ENCODE measurements at regions of chr11 and their contacts with region 1.

Region 1: DNA sequence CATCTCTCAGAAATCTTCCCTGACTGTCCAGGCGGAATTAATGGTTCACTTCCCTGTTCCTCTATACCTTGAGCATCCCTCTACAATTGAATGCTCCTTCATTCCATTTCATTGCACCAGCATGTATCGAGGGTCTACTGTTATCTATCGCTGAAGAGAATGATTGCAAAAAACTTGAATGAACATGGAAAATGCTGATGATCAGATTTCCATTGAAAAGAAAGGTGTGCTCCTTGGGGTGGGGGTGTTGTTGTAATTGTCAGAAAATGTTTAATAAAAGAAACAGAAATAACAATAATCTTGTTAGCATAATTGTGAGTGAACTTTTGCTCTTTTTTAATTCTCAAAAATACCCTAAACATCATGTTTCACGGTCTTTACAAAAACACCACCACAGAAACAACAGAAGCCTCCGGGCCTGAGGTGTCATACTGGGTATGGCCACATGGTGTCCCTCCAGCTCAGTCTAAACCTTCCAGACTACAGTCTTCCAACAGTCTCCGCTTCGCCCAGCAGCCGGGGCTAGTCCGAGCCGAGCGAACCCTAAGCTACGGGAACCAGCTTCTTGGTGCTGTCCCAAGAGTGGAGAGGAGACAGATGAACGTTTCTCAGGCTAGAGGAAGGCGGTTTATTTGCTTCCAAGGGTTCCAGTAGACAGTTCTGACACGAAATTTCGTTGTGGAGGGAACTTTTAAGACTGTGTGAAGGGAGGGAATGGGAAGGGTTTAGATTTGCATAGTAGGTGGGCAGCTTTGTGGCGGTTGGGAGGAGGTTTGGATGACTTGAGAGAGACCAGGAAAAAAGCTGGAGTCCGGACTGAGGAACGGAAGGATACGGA is 75.8 kb upstream of the ZBED5 start:
- DNase-seq: peak; percentile 91
- ATAC-seq: peak; percentile 91
- H3K4me3 Mint-ChIP-seq: peak overlapping the region; percentile 65
- H3K27ac Mint-ChIP-seq: peak overlapping the region; percentile 16
- H3K4me1 Mint-ChIP-seq: peaks cover 9% of the 10 kb centered on the region
- H3K27me3 Mint-ChIP-seq: peaks cover 27% of the 10 kb centered on the region

Region 2: GRCh38 chr11:10857709-10858438 is 75.8 kb before region 1 on chr11 and contains the start of gene ZBED5:
- CTCF ChIA-PET with region 1: interaction called, 4 read pairs
- POLR2A ChIA-PET with region 1: interaction called, 4 read pairs
- intact Hi-C with region 1: loop called in 1 of 2 experiments (anchors 1 kb)
- DNase-seq: peak; percentile 98
- ATAC-seq: peak; percentile 93
- H3K4me3 Mint-ChIP-seq: peak within 1 kb of the TSS; percentile 100
- H3K27ac Mint-ChIP-seq: peak within 1 kb of the TSS; percentile 100
- H3K4me1 Mint-ChIP-seq: peaks cover 40% of the 10 kb centered on the region
- H3K27me3 Mint-ChIP-seq: no peaks in the 10 kb centered on the region
- total RNA-seq, gene ZBED5: 34.1 to 44.3 TPM

Region 3: DNA sequence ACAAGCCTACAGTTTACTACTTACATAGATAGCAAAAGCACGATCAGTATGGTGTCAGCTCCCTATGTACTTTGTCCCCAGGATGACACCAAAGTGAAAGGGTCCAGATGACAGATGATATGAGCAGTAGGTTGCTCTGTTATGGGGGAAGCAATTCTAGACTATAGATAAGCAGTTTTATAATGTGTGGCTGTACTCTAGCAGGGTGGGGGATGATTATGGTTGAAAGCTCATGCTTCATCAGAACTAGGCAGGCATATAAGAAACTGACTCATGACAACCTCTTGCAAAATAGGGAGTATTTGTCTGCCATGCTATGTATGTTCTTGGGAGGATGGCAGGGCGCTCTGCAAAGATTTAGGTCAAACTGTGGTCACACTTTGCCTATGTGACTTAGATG is 82.4 kb after region 1 on chr11:
- CTCF ChIA-PET with region 1: interaction called, 31 read pairs
- POLR2A ChIA-PET with region 1: no interaction called
- intact Hi-C with region 1: no loop called
- DNase-seq: no peak
- ATAC-seq: peak; percentile 23
- H3K4me3 Mint-ChIP-seq: no peak overlapping the region
- H3K27ac Mint-ChIP-seq: no peak overlapping the region
- H3K4me1 Mint-ChIP-seq: no peaks in the 10 kb centered on the region
- H3K27me3 Mint-ChIP-seq: peaks cover 4% of the 10 kb centered on the region

Region 4: GRCh38 chr11:11036848-11037732 is 103.4 kb after region 1 on chr11:
- CTCF ChIA-PET with region 1: interaction called, 12 read pairs
- POLR2A ChIA-PET with region 1: no interaction called
- intact Hi-C with region 1: no loop called
- DNase-seq: peak; percentile 42
- ATAC-seq: peak; percentile 74
- H3K4me3 Mint-ChIP-seq: no peak overlapping the region
- H3K27ac Mint-ChIP-seq: no peak overlapping the region
- H3K4me1 Mint-ChIP-seq: peaks cover 10% of the 10 kb centered on the region
- H3K27me3 Mint-ChIP-seq: no peaks in the 10 kb centered on the region

Region 5: DNA sequence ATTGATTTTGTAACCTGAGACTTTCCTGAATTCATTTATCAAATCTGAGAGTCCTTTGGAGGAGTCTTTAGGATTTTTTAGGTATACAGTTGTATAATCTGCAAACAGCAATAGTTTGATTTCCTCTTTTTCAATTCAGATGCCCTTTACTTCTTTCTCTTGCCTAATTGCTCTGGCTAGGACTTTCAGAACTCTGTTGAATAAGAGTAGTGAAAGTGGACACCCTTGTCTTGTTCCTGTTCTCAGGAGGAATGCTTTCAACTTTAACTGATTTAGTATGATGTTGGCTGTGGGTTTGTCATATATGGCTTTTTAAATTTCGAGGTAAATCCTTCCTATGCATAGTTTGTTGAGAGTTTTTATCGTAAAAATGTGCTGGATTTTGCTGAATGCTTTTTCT is 191.9 kb after region 1 on chr11:
- CTCF ChIA-PET with region 1: no interaction called
- POLR2A ChIA-PET with region 1: no interaction called
- intact Hi-C with region 1: no loop called
- DNase-seq: no peak
- ATAC-seq: no peak
- H3K4me3 Mint-ChIP-seq: no peak overlapping the region
- H3K27ac Mint-ChIP-seq: no peak overlapping the region
- H3K4me1 Mint-ChIP-seq: no peaks in the 10 kb centered on the region
- H3K27me3 Mint-ChIP-seq: peaks cover 3% of the 10 kb centered on the region

Region 6: DNA sequence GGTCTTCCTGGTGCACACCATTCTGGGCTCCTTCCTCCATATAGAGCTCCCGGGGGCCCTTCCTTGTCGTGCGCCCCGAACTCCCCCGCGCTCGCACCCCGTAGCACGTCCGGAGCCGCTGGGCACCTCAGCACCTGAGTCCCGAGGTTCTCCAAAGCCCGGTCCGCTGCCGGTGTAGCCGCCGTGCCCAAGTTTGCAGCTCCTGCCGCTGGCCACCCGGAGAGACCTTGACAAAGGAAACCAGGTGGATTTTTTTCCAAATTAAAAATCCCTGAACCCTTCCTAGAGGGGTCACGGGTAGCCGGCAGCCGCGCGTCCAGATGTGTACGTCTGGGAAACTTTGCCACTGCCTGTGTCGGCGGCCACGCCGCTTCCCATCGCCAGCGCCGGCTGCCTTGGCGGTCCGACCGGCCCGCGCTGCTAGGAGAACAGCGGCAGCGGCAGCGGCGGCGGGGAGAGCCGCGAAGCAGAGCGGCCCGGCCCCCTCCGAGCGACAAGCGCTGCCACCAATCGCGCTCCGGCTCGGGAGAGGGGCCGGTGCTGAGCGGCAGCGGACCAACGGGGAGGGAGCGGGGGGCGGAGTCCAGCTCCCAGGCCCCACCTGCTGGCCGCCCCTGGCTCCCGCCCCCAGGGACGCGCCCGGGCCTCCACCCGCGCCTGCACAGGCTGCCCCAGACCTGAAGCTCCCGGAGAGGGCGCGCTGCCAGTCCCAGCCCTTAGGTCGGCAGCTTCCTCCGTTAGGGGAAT is 688.1 kb after region 1 on chr11 and contains the start of gene GALNT18:
- CTCF ChIA-PET with region 1: no interaction called
- POLR2A ChIA-PET with region 1: no interaction called
- intact Hi-C with region 1: loop called in 1 of 2 experiments (anchors 5 kb)
- DNase-seq: peak; percentile 94
- ATAC-seq: peak; percentile 99
- H3K4me3 Mint-ChIP-seq: peak within 1 kb of the TSS; percentile 80
- H3K27ac Mint-ChIP-seq: peak within 1 kb of the TSS; percentile 63
- H3K4me1 Mint-ChIP-seq: peaks cover 5% of the 10 kb centered on the region
- H3K27me3 Mint-ChIP-seq: peaks cover 37% of the 10 kb centered on the region
- total RNA-seq, gene GALNT18: 6.9 to 8.8 TPM

Region 7: DNA sequence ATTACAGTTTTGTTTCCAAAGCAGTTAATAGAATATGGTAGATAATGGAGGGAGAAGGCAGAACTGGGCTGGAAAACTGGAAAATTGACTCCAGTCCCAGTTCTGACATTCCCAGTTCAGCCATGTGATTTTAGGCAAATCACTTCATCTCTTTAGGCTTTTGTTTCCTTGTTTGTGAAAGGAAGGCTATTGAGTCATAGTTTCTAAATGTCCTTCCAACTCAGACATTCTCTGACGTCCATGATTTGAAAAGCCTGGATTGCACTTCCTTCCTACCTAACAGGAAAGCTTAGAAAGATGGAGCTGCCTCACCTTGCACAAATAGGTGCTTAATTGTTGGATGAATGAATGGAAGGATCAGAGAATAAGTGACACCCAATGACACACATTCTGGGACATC is 707.9 kb after region 1 on chr11:
- CTCF ChIA-PET with region 1: no interaction called
- POLR2A ChIA-PET with region 1: no interaction called
- intact Hi-C with region 1: no loop called
- DNase-seq: no peak
- ATAC-seq: no peak
- H3K4me3 Mint-ChIP-seq: no peak overlapping the region
- H3K27ac Mint-ChIP-seq: no peak overlapping the region
- H3K4me1 Mint-ChIP-seq: no peaks in the 10 kb centered on the region
- H3K27me3 Mint-ChIP-seq: peaks cover 20% of the 10 kb centered on the region

Measured in activated CD4-positive, alpha-beta T cell treated with anti-CD3 and anti-CD28 coated beads for 36 hours (primary cell).